PC-9 (cell line): ENCODE measurements at regions of chr15 and their contacts with region 1.

Region 1: DNA sequence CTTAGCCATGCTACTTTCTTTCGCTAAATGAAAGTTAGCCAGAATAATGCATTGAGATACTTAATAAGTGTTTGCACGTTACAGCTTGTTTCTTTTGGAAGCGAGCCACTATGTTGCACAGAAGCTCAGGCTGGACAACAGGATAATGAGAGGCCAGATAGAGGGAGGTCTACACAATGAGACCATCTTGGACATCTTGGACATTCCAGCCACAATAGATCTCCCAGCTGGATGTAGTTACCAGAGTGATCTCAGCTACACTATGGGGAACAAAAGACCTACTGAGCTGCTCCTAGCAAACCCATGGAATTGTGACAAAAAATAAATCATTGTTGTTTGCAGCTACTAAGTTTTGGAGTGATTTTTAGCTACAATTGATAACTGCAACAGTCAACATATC is 540.1 kb upstream of the SEMA6D start:
- DNase-seq: no peak
- H3K4me3 ChIP-seq: no peak overlapping the region
- H3K27ac ChIP-seq: no peak overlapping the region
- H3K4me1 ChIP-seq: no peaks in the 10 kb centered on the region
- H3K27me3 ChIP-seq: no peaks in the 10 kb centered on the region
- CTCF ChIP-seq: no peak

Region 2: DNA sequence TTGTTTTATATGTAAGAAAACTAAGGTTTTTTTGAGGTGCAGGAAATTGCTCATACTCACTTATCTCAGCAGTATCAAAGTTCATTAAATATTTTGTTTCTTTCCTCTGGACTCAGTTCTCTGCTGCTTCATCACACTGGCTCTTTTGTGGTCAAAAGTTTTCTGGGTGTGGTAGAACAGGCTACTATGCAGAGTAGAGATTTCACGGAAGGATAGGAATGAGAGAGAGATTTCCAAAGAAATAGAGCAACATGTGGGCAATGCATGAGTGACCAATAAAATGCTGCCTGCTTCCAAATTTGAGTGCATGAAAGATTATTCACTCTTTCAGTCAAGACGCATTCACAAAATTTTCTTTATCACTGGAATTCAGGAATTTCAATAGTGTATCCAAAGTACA is 37.2 kb before region 1 on chr15:
- CTCF ChIA-PET with region 1: no interaction called
- POLR2A ChIA-PET with region 1: no interaction called
- intact Hi-C with region 1: no loop called
- DNase-seq: no peak
- H3K4me3 ChIP-seq: no peak overlapping the region
- H3K27ac ChIP-seq: no peak overlapping the region
- H3K4me1 ChIP-seq: no peaks in the 10 kb centered on the region
- H3K27me3 ChIP-seq: no peaks in the 10 kb centered on the region
- CTCF ChIP-seq: no peak

Region 3: DNA sequence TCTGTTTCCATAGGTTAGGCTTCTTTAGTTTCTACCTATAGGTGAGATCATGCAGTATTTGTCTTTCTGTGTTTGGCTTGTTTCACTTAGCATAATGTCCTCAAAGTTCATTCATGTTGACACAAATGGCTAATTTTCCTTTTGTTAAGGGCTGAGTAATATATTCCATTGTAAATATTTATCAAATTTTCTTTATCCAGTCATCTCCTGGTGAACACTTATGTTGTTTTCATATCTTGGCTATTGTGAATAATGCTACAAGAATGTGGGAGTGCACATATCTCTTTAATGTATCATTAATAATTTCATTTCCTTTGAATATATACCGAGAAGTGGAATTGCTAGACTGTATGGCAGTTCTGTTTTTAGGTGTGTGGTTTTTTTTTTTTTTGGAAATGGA is 289.2 kb after region 1 on chr15:
- CTCF ChIA-PET with region 1: no interaction called
- POLR2A ChIA-PET with region 1: no interaction called
- intact Hi-C with region 1: no loop called
- DNase-seq: no peak
- H3K4me3 ChIP-seq: no peak overlapping the region
- H3K27ac ChIP-seq: no peak overlapping the region
- H3K4me1 ChIP-seq: no peaks in the 10 kb centered on the region
- H3K27me3 ChIP-seq: no peaks in the 10 kb centered on the region
- CTCF ChIP-seq: no peak

Region 4: GRCh38 chr15:47718497-47719437 is 541.6 kb after region 1 on chr15:
- CTCF ChIA-PET with region 1: interaction called, 12 read pairs
- POLR2A ChIA-PET with region 1: no interaction called
- intact Hi-C with region 1: no loop called
- DNase-seq: no peak
- H3K4me3 ChIP-seq: no peak overlapping the region
- H3K27ac ChIP-seq: no peak overlapping the region
- H3K4me1 ChIP-seq: no peaks in the 10 kb centered on the region
- H3K27me3 ChIP-seq: peaks cover 12% of the 10 kb centered on the region
- CTCF ChIP-seq: no peak